ENCODE measurements at regions of chrX and their contacts with region 1.

Region 1: DNA sequence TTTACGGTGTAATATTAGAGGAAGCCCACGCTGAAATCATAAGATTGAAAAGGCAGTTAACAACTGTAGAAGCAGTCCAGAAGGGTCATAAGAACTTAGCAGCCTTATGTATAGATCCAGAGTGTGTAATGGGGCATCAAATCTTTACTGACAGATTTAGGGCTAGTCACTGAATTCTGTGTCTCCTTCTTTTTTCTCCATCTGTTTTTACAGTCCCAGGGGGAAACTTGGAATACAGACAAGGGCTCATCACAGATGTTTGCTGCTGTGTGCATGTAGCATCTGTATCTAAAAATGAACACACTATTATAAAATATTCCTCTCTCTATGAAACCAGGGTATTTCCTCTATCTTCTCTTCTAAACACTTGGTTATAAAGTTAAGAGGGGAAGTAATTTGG is 43.9 kb downstream of the CYSLTR1 start:
- DNase-seq: no peak
- H3K4me3 Mint-ChIP-seq: no peak overlapping the region
- H3K27ac Mint-ChIP-seq: no peak overlapping the region
- H3K4me1 Mint-ChIP-seq: no peaks in the 10 kb centered on the region
- H3K27me3 Mint-ChIP-seq: no peaks in the 10 kb centered on the region

Region 2: GRCh38 chrX:78314571-78314970 is 31.1 kb after region 1 on chrX:
- CTCF ChIA-PET with region 1: no interaction called
- intact Hi-C with region 1: loop called (anchors 5 kb)
- DNase-seq: peak; percentile 42
- H3K4me3 Mint-ChIP-seq: no peak overlapping the region
- H3K27ac Mint-ChIP-seq: peak overlapping the region; percentile 26
- H3K4me1 Mint-ChIP-seq: peaks cover 62% of the 10 kb centered on the region
- H3K27me3 Mint-ChIP-seq: no peaks in the 10 kb centered on the region

Region 3: GRCh38 chrX:78321809-78322208 is 38.3 kb after region 1 on chrX:
- CTCF ChIA-PET with region 1: no interaction called
- intact Hi-C with region 1: loop called (anchors 1 kb)
- DNase-seq: peak; percentile 63
- H3K4me3 Mint-ChIP-seq: peak overlapping the region; percentile 32
- H3K27ac Mint-ChIP-seq: peak overlapping the region; percentile 85
- H3K4me1 Mint-ChIP-seq: peaks cover 36% of the 10 kb centered on the region
- H3K27me3 Mint-ChIP-seq: no peaks in the 10 kb centered on the region

Measured in activated naive CD4-positive, alpha-beta T cell treated with anti-CD3 and anti-CD28 coated beads for 36 hours (primary cell).